ENCODE measurements at regions of chr6 and their contacts with region 1.

Region 1: DNA sequence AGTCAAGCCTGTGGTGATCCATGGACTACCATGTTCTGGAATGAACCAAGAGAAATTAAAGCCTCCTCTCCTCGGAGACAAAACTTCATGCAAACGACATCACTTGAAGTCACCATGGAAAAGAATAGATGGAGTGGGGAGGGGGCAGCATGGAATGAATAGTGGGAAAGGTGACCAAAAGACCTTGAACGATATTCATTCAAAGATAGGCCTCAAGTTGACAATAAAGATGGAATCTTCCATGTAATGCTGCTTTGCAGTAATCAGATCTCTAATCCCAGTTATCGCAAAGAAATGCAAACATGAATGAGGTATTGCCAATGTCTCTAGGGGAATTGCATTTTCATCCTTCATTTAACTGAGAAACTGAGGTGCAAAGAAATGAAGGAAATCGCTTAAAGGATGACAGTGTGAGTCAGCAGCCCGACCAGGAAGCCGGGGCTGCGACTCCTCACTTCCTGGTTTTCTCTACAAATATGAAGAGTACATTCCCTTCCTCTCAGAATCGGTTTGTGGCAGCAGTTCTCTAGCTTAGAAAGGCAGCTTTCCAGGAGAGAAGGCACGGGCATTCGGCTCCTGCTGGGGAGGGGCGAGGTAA is 65.6 kb upstream of the RREB1 start:
- DNase-seq: peak; percentile 36 to 44
- H3K4me3 ChIP-seq: peak overlapping the region; percentile 8
- H3K4me3 Mint-ChIP-seq: peak overlapping the region; percentile 64
- H3K27ac Mint-ChIP-seq: peak overlapping the region; percentile 81
- H3K4me1 ChIP-seq: peaks cover 26% of the 10 kb centered on the region
- H3K4me1 Mint-ChIP-seq: peaks cover 23% of the 10 kb centered on the region
- H3K27me3 ChIP-seq: no peaks in the 10 kb centered on the region
- H3K27me3 Mint-ChIP-seq: no peaks in the 10 kb centered on the region
- CTCF ChIP-seq: no peak

Region 2: DNA sequence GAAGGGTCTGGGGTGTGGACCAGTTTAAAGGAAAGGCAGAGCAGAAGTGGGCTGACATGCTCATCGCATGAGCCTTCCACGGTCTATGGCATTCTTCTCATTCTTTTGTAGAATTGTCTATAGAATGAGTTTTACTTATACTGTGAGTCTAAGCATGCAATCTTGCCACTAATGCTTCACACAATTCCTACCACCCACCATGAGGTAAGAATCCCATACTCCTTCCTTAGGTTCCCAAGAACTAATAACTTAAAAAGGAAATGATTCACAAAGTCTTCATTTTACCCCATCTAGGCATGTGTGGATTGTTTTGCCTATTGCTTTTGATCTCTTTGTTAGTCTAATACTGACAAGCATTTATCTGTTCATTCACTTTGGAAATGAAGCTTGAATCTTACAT is 258.4 kb before region 1 on chr6:
- CTCF ChIA-PET with region 1: no interaction called
- POLR2A ChIA-PET with region 1: interaction called, 10 read pairs
- intact Hi-C with region 1: no loop called
- DNase-seq: no peak
- H3K4me3 ChIP-seq: no peak overlapping the region
- H3K4me3 Mint-ChIP-seq: no peak overlapping the region
- H3K27ac Mint-ChIP-seq: no peak overlapping the region
- H3K4me1 ChIP-seq: no peaks in the 10 kb centered on the region
- H3K4me1 Mint-ChIP-seq: no peaks in the 10 kb centered on the region
- H3K27me3 ChIP-seq: no peaks in the 10 kb centered on the region
- H3K27me3 Mint-ChIP-seq: peaks cover 6% of the 10 kb centered on the region
- CTCF ChIP-seq: no peak

Region 3: GRCh38 chr6:6969761-6970223 is 72.4 kb before region 1 on chr6:
- CTCF ChIA-PET with region 1: no interaction called
- POLR2A ChIA-PET with region 1: no interaction called
- intact Hi-C with region 1: loop called (anchors 2 kb)
- DNase-seq: peak; percentile 96 to 98
- H3K4me3 ChIP-seq: no peak overlapping the region
- H3K4me3 Mint-ChIP-seq: peak overlapping the region; percentile 52
- H3K27ac Mint-ChIP-seq: peak overlapping the region; percentile 98
- H3K4me1 ChIP-seq: peaks cover 54% of the 10 kb centered on the region
- H3K4me1 Mint-ChIP-seq: peaks cover 50% of the 10 kb centered on the region
- H3K27me3 ChIP-seq: no peaks in the 10 kb centered on the region
- H3K27me3 Mint-ChIP-seq: no peaks in the 10 kb centered on the region
- CTCF ChIP-seq: peak in 1 of 2 experiments; percentile 24

Measured in Caco-2 (cell line).